Activated CD4-positive, alpha-beta memory T cell treated with anti-CD3 and anti-CD28 coated beads for 36 hours (primary cell): ENCODE measurements at regions of chr17 and their contacts with region 1.

Region 1: DNA sequence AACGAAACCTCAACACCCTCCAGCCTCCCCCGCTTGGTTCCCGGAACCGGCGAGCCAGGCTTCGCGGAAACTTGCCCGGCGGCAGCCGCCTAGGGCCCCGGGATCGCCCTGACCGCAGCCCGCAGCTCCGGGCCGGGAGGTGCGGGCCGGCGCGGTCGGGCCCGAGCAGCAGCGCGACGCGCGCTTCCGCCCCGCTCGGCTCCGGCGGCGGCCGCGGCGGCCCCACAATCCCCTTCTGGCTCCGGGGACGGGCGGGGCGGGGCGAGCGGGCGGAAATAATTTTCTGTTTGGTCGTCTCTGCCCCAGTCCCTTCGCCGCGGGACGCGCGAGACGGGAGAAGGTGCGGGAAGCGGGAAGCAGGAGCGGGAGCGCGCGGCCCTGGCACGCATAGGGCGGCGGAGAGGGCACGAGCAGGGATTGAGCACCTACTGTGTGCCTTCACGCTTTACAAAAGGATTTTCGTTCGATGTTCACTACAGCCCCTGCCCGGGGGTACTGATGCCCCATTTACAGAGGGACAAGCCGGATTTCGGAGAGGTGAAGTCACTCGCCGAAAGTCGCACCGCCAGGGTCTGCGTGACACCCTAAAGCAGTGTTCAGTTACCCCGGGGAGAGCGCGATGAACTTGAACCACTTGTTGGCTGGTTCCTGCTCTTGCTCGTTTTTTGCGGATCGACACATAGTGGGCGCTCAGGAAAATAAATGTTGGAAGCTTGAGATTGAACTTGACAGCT is 2.7 kb upstream of the MLLT6 start:
- DNase-seq: peak; percentile 92
- H3K4me3 Mint-ChIP-seq: peak overlapping the region; percentile 100
- H3K27ac Mint-ChIP-seq: peak overlapping the region; percentile 100
- H3K4me1 Mint-ChIP-seq: peaks cover 42% of the 10 kb centered on the region
- H3K27me3 Mint-ChIP-seq: no peaks in the 10 kb centered on the region

Region 2: GRCh38 chr17:37609170-37610040 is 1092.9 kb before region 1 on chr17 and contains the start of gene SYNRG:
- CTCF ChIA-PET with region 1: no interaction called
- POLR2A ChIA-PET with region 1: no interaction called
- intact Hi-C with region 1: loop called (anchors 2 kb)
- DNase-seq: peak; percentile 96
- H3K4me3 Mint-ChIP-seq: peak within 1 kb of the TSS; percentile 87
- H3K27ac Mint-ChIP-seq: peak within 1 kb of the TSS; percentile 93
- H3K4me1 Mint-ChIP-seq: peaks cover 36% of the 10 kb centered on the region
- H3K27me3 Mint-ChIP-seq: no peaks in the 10 kb centered on the region
- total RNA-seq, gene SYNRG: 44.4 to 45.2 TPM

Region 3: GRCh38 chr17:38717139-38717745 is 14.9 kb after region 1 on chr17:
- CTCF ChIA-PET with region 1: interaction called, 6 read pairs
- POLR2A ChIA-PET with region 1: interaction called, 34 read pairs
- intact Hi-C with region 1: no loop called
- DNase-seq: no peak
- H3K4me3 Mint-ChIP-seq: no peak overlapping the region
- H3K27ac Mint-ChIP-seq: peak overlapping the region; percentile 1
- H3K4me1 Mint-ChIP-seq: peaks cover 48% of the 10 kb centered on the region
- H3K27me3 Mint-ChIP-seq: no peaks in the 10 kb centered on the region

Region 4: GRCh38 chr17:38729886-38730525 is 27.7 kb after region 1 on chr17 and contains the start of gene CISD3:
- CTCF ChIA-PET with region 1: interaction called, 32 read pairs
- POLR2A ChIA-PET with region 1: interaction called, 116 read pairs
- intact Hi-C with region 1: loop called (anchors 1 kb)
- DNase-seq: peak; percentile 89
- H3K4me3 Mint-ChIP-seq: peak within 1 kb of the TSS; percentile 92
- H3K27ac Mint-ChIP-seq: peak within 1 kb of the TSS; percentile 98
- H3K4me1 Mint-ChIP-seq: peaks cover 78% of the 10 kb centered on the region
- H3K27me3 Mint-ChIP-seq: no peaks in the 10 kb centered on the region
- total RNA-seq, gene CISD3: 54.7 to 59.1 TPM

Region 5: DNA sequence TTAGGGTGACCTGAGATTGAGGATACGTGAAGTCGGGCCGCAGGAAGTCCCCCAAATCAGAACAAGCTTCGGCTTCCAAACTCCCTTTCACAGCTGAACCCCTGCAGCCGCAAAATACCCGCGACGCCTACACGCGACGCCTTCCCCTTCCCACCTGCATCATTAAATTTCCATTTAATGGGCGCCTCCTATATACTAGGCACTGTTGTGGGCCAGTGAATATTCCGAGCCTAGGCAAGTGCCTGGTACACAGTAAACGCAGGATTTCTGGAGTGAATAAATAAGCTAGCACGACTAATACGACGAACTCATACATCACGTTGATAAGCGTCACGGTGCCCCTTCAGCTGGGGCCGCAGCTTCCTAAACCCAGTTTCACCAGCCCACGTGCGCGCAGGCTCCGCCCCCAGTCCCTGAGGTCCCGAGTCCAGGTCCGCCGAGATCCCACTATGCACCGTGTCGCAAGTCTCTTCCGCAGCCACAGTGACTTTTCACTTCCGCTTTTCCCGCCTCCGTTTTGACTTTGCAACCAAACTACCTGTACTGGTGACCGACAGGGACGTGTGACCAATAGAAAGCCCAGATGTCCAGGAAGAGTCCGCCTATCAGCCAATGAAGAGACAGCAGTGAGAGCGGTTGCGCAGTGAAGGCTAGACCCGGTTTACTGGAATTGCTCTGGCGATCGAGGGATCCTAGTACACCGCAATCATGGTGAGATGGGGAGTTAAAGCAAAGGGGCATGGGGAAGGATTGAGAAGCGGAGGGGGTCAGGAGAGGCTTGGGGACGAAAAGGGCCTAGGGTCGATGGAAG is 50.0 kb after region 1 on chr17 and contains the start of gene PSMB3:
- CTCF ChIA-PET with region 1: no interaction called
- POLR2A ChIA-PET with region 1: interaction called, 8 read pairs
- intact Hi-C with region 1: loop called (anchors 1 kb)
- DNase-seq: peak; percentile 99
- H3K4me3 Mint-ChIP-seq: peak within 1 kb of the TSS; percentile 92
- H3K27ac Mint-ChIP-seq: peak within 1 kb of the TSS; percentile 94
- H3K4me1 Mint-ChIP-seq: peaks cover 40% of the 10 kb centered on the region
- H3K27me3 Mint-ChIP-seq: peaks cover 27% of the 10 kb centered on the region
- total RNA-seq, gene PSMB3: 335 to 348 TPM